A549 (cell line): ENCODE measurements at regions of chr20 and their contacts with region 1.

Region 1: GRCh38 chr20:4592316-4593148 is 129.2 kb upstream of the PRND start:
- DNase-seq: peak; percentile 76 to 78
- ATAC-seq: peak; percentile 94 to 97
- H3K4me3 ChIP-seq: peak overlapping the region; percentile 51
- H3K27ac ChIP-seq: peak overlapping the region; percentile 91 to 93
- H3K4me1 ChIP-seq: peaks cover 15% of the 10 kb centered on the region
- CTCF ChIP-seq: peak; percentile 99
- EP300 ChIP-seq: no peak
- POLR2A ChIP-seq: no peak
- RAD21 ChIP-seq: peak; percentile 94 to 100

Region 2: DNA sequence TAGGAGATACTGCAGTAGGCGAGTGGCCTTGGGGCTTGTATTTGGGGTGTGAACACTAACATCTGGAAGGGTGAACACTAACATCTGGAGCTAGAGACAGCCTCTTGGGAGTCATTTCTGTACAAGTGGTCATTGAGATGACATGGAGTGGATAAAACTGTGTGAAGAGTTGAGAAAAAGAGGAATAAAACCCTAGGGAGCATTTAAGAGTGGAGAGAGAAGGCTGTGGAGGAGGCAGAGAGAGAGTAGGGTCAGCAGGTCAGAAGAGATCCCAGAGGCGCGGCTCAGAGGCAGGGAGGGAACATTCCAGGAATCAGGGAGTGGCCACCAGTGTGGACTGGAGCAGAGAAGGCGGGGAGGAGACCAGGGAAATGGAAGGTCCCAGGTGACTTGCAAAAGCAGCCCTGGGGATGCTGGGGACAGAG is 375.2 kb before region 1 on chr20:
- CTCF ChIA-PET with region 1: interaction called, 11 read pairs
- POLR2A ChIA-PET with region 1: no interaction called
- DNase-seq: peak; percentile 69 to 84
- ATAC-seq: peak; percentile 44 to 77; a peak in 4 of 6 replicates
- H3K4me3 ChIP-seq: no peak overlapping the region
- H3K27ac ChIP-seq: peak overlapping the region; percentile 53 to 82; a peak in 5 of 6 replicates
- H3K4me1 ChIP-seq: peaks cover 43% of the 10 kb centered on the region
- CTCF ChIP-seq: no peak
- EP300 ChIP-seq: no peak
- POLR2A ChIP-seq: no peak
- RAD21 ChIP-seq: no peak

Region 3: GRCh38 chr20:4244700-4245485 is 347.6 kb before region 1 on chr20:
- CTCF ChIA-PET with region 1: interaction called, 38 read pairs
- POLR2A ChIA-PET with region 1: no interaction called
- DNase-seq: peak; percentile 44 to 85
- ATAC-seq: no peak
- H3K4me3 ChIP-seq: no peak overlapping the region
- H3K27ac ChIP-seq: peak overlapping the region; percentile 69 to 80
- H3K4me1 ChIP-seq: peaks cover 24% of the 10 kb centered on the region
- CTCF ChIP-seq: no peak
- EP300 ChIP-seq: no peak
- POLR2A ChIP-seq: no peak
- RAD21 ChIP-seq: no peak

Region 4: DNA sequence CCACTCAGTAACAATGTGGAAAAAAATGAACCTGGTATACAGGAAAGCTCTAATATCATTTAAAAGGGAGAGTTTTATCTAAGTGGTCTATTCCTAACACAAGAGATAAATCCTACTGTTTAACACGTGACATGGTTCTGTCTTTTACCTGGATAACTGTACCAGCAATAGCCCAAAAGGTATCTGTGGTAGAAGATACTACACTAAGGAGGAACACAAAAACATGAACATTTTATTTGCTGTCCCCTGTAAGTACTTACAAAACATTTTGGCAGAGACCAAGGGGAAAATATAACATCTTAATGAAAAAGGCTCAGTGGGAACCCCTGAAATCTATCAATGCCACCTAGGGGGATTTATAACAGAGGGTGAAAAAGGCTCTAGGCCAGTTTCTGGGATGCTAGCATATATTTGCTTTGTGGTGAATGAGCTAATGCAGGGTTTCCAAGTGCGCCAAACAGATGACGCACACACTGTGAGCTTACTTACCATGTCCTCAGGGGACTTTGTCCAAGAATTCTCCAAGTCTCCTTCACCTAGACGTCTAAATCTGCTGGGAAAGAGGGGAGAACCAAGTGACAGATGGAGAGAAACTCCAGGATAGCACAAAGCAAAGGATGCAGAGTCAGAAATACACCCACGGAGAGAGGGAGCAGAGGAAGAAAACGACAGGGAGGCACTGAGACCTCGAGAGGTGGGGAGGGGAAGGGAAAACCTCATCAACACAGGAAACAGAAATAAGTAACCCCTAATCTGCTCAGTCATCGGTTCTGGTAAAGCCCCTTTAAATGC is 18.8 kb before region 1 on chr20:
- CTCF ChIA-PET with region 1: interaction called, 30 read pairs
- POLR2A ChIA-PET with region 1: interaction called, 4 read pairs
- DNase-seq: peak; percentile 94 to 99
- ATAC-seq: peak; percentile 97 to 98
- H3K4me3 ChIP-seq: peak overlapping the region; percentile 25
- H3K27ac ChIP-seq: peak overlapping the region; percentile 88 to 91
- H3K4me1 ChIP-seq: peaks cover 57% of the 10 kb centered on the region
- CTCF ChIP-seq: no peak; the same call in 2 of the 3 replicates
- EP300 ChIP-seq: peak; percentile 84 to 92; a peak in 4 of 5 replicates
- POLR2A ChIP-seq: no peak
- RAD21 ChIP-seq: peak; percentile 29 to 71

Region 5: GRCh38 chr20:4702562-4703280 is 110.2 kb after region 1 on chr20:
- CTCF ChIA-PET with region 1: no interaction called
- POLR2A ChIA-PET with region 1: no interaction called
- DNase-seq: no peak
- ATAC-seq: peak; percentile 33 to 34; a peak in 4 of 6 replicates
- H3K4me3 ChIP-seq: no peak overlapping the region
- H3K27ac ChIP-seq: no peak overlapping the region
- H3K4me1 ChIP-seq: peaks cover 9% of the 10 kb centered on the region
- CTCF ChIP-seq: no peak
- EP300 ChIP-seq: no peak
- POLR2A ChIP-seq: no peak
- RAD21 ChIP-seq: no peak

Region 6: GRCh38 chr20:4720041-4720976 is 127.8 kb after region 1 on chr20:
- CTCF ChIA-PET with region 1: interaction called, 13 read pairs
- POLR2A ChIA-PET with region 1: no interaction called
- DNase-seq: peak; percentile 68 to 90
- ATAC-seq: peak; percentile 75 to 85
- H3K4me3 ChIP-seq: peak overlapping the region; percentile 23; the same call in 1 of the 3 replicates
- H3K27ac ChIP-seq: no peak overlapping the region
- H3K4me1 ChIP-seq: peaks cover 6% of the 10 kb centered on the region; the same call in 2 of the 3 replicates
- CTCF ChIP-seq: peak; percentile 99
- EP300 ChIP-seq: no peak
- POLR2A ChIP-seq: no peak
- RAD21 ChIP-seq: peak; percentile 99